ENCODE measurements at regions of chr9 and their contacts with region 1.

Region 1: GRCh38 chr9:106921341-106921899 is 58.5 kb downstream of the ZNF462 start:
- DNase-seq: peak; percentile 84
- ATAC-seq: peak; percentile 87
- H3K4me3 ChIP-seq: peak overlapping the region; percentile 0; the same call in 1 of the 2 replicates
- H3K27ac ChIP-seq: peak overlapping the region; percentile 83
- H3K4me1 ChIP-seq: peaks cover 15% of the 10 kb centered on the region
- H3K27me3 ChIP-seq: no peaks in the 10 kb centered on the region
- CTCF ChIP-seq: no peak
- POLR2A ChIP-seq: 0 out of 2 replicates have a peak, but pooled peaks have one; percentile 23
- RAD21 ChIP-seq: 0 out of 2 replicates have a peak, but pooled peaks have one; percentile 12

Region 2: DNA sequence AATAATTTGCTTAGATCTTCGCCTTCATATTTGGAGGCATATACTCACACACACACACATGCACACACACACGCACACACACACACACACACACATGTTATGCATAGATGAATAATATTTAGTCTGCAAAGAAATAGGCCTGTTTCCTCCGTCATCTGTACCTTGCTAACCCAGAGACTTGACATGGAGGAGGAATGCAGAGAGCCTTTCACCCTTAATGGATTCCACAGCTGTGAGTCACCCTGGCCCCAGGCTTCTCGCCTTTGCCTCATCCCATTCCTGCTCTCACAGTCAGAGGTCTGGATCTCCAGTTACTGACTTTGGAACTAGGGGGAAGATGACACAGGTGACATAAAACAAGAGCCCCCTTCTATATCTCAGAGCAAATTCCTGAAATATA is 28.8 kb before region 1 on chr9:
- CTCF ChIA-PET with region 1: no interaction called
- POLR2A ChIA-PET with region 1: no interaction called
- dilution Hi-C with region 1: no loop called
- in situ Hi-C with region 1: no loop called
- intact Hi-C with region 1: loop called (anchors 2 kb)
- DNase-seq: peak; percentile 98
- ATAC-seq: peak; percentile 96
- H3K4me3 ChIP-seq: no peak overlapping the region
- H3K27ac ChIP-seq: no peak overlapping the region
- H3K4me1 ChIP-seq: peaks cover 6% of the 10 kb centered on the region
- H3K27me3 ChIP-seq: no peaks in the 10 kb centered on the region
- CTCF ChIP-seq: no peak
- POLR2A ChIP-seq: no peak
- RAD21 ChIP-seq: no peak; the same call in 1 of the 2 replicates

Measured in IMR-90 (cell line).